ENCODE measurements at regions of chr12 and their contacts with region 1.

Region 1: GRCh38 chr12:122123051-122123760 is 44.6 kb downstream of the MLXIP start:
- DNase-seq: peak; percentile 87
- H3K4me3 ChIP-seq: peak overlapping the region in 2 of 4 donors; percentile 8 to 10
- H3K27ac ChIP-seq: peak overlapping the region; percentile 5 to 77 (median 74)
- H3K4me1 ChIP-seq: peaks cover 0 to 88% (median 74%) of the 10 kb centered on the region in 4 donors
- H3K27me3 ChIP-seq: no peaks in the 10 kb centered on the region
- CTCF ChIP-seq: peak; percentile 79 to 91 (median 84)
- EP300 ChIP-seq: no peak
- POLR2A ChIP-seq: no peak

Region 2: DNA sequence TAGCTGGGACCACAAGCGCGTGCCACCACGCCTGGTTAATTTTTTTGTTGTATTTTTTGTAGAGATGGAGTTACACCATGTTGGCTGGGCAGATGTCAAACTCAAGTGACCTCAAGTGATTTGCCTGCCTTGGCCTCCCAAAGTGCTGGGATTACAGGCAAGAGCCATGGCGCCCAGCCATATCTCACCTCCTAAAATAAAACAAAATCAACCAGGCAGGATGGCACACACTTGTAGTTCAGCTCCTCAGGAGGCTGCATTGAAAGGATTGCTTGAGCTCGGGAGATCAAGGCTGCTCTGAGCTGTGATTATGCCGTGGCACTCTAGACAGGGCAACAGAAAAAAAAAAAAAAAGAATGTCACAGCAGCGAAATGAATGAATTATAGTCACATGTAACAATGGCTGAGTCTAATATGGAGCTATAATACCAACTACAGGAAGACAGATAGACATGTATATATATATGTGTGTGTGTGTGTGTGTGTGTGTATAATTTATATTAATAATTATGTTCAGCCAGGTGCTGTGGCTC is 430.0 kb before region 1 on chr12:
- intact Hi-C with region 1: no loop called
- DNase-seq: no peak
- H3K4me3 ChIP-seq: no peak overlapping the region
- H3K27ac ChIP-seq: no peak overlapping the region
- H3K4me1 ChIP-seq: no peaks in the 10 kb centered on the region
- H3K27me3 ChIP-seq: no peaks in the 10 kb centered on the region
- CTCF ChIP-seq: no peak
- EP300 ChIP-seq: no peak
- POLR2A ChIP-seq: no peak

Region 3: DNA sequence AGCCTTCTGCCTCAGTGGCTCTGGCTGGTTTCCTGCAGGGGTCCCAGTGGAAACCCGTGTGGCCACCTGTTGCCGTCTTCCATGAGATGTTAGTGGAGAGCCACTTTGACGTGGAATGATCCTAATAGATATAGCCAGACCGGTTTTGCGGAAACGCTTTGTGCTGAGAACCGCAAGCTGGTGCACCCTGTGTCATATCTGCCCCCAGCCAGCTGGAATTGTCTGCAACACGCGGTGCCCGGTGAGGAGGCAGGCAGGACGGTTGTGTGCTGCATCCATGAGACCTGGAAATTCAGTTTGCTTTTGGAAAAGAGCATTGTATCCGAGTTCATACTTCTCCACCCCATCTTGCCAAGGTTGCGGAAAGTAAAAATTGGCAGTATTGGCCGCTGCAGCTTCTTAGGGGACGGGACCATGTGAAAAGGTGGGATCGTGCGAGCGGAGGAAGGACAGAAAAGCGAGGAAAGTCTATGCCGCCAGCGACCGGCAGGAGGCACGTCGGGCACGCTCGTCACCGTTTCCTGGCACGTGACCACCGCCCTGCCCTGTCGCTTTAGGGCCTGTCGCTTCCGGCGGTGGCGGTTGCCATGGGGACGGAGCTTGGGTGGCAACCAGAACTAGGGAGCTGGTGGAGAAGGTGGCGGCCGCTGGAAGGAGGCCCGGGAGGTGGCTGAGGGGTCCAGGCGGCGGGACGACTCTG is 205.1 kb before region 1 on chr12 and contains the start of gene CFAP251:
- intact Hi-C with region 1: loop called (anchors 2 kb)
- DNase-seq: peak; percentile 97
- H3K4me3 ChIP-seq: peak within 1 kb of the TSS; percentile 31 to 53 (median 44)
- H3K27ac ChIP-seq: peak within 1 kb of the TSS in 3 of 4 donors; percentile 38 to 52 (median 44)
- H3K4me1 ChIP-seq: peaks cover 0 to 8% (median 0%) of the 10 kb centered on the region in 4 donors
- H3K27me3 ChIP-seq: no peaks in the 10 kb centered on the region
- CTCF ChIP-seq: peak; percentile 53 to 78 (median 62)
- EP300 ChIP-seq: no peak
- POLR2A ChIP-seq: no peak
- total RNA-seq, gene CFAP251: 0.68 to 3.0 (median 1.2) TPM

Region 4: GRCh38 chr12:122054842-122055520 is 68.2 kb before region 1 on chr12:
- intact Hi-C with region 1: loop called (anchors 1 kb)
- DNase-seq: no peak
- H3K4me3 ChIP-seq: no peak overlapping the region
- H3K27ac ChIP-seq: peak overlapping the region in 3 of 4 donors; percentile 93 to 96 (median 93)
- H3K4me1 ChIP-seq: peaks cover 0 to 77% (median 59%) of the 10 kb centered on the region in 4 donors
- H3K27me3 ChIP-seq: no peaks in the 10 kb centered on the region
- CTCF ChIP-seq: no peak
- EP300 ChIP-seq: no peak
- POLR2A ChIP-seq: no peak

Region 5: DNA sequence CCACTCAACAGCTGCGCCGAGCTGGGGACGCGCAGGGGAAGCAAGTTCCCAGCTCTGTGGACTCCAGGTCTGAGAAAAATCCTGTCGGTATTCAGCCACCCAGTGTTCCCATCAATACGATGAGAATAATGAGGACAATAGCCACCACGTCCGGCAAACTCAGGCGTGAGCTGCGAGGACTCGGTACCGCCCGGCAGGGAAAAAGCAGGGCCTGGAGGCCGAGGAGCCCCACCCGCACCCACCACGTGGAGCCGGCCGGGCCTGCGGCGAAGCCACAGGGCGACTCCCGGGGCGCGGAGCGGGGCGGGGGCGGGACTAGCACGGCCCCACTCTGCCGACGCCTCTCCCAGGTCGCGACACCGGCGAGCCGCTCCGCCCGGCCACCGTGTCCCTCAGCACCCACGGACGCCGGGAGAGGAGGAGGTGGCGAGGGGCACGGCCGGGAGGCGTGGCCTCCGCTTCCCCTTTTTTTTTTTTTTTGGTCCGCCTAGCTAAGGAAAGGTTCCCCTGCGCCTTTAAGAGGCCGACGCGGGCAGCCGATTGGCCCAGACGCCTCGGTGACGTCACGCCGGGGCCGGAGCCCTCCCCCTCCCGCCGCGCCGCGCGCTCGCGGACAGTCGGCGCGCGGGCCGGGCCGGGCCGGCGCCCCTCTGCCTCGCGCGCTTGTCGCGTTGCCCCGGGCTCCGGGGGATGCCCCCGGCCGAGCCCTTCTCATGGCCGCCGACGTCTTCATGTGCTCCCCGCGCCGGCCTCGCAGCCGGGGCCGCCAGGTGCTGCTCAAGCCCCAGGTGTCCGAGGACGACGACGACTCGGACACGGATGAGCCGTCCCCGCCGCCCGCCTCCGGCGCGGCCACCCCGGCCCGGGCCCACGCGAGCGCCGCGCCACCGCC is 44.8 kb before region 1 on chr12 and contains the start of gene MLXIP:
- intact Hi-C with region 1: loop called (anchors 5 kb)
- DNase-seq: peak; percentile 98
- H3K4me3 ChIP-seq: peak within 1 kb of the TSS; percentile 77 to 94 (median 90)
- H3K27ac ChIP-seq: peak within 1 kb of the TSS; percentile 87 to 96 (median 90)
- H3K4me1 ChIP-seq: peaks cover 0 to 57% (median 37%) of the 10 kb centered on the region in 4 donors
- H3K27me3 ChIP-seq: no peaks in the 10 kb centered on the region
- CTCF ChIP-seq: no peak
- EP300 ChIP-seq: no peak
- POLR2A ChIP-seq: peak; percentile 18 to 61
- total RNA-seq, gene MLXIP: 32.9 to 87.5 (median 57.3) TPM

Region 6: DNA sequence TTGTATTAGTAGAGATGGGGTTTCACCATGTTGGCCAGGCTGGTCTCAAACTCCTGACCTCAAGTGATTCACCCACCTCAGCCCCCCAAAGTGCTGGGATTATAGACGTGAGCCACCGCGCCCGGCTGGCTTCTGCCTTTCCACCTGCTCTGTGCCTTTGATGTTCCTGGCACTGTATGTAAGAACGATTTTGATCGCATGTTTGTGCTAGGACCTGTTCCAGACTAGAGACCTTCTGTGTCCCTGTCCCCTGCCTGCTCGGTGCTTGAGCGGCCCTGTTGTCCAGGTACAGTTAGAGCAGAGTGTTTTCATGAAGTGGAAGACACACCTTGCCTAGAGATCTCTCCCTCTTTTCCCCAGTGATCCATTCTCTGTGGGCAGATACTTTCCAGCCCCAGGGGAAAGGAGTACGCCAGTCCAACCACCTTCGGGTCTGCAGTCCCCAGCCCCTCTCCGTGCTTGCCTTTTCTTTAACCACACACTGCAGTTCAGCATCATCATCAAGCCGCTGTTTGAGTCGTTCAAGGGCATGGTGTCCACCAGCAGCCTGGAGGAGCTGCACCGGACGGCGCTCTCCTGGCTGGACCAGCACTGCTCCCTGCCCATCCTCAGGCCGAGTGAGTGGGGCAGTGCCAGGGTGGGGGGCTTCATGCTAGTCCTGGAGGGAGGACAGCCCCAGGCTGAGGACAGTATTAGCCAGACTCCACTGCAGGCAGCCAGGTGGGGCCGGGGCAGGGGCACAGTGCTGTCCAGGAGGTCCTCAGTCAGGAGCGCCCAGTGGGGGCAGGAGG is 17.5 kb after region 1 on chr12:
- intact Hi-C with region 1: loop called (anchors 1 kb)
- DNase-seq: no peak
- H3K4me3 ChIP-seq: no peak overlapping the region
- H3K27ac ChIP-seq: no peak overlapping the region
- H3K4me1 ChIP-seq: no peaks in the 10 kb centered on the region
- H3K27me3 ChIP-seq: no peaks in the 10 kb centered on the region
- CTCF ChIP-seq: no peak
- EP300 ChIP-seq: no peak
- POLR2A ChIP-seq: no peak

Region 7: GRCh38 chr12:122166422-122167349 is 43.5 kb after region 1 on chr12:
- intact Hi-C with region 1: no loop called
- DNase-seq: no peak
- H3K4me3 ChIP-seq: no peak overlapping the region
- H3K27ac ChIP-seq: no peak overlapping the region
- H3K4me1 ChIP-seq: no peaks in the 10 kb centered on the region
- H3K27me3 ChIP-seq: peaks cover 0 to 3% (median under 1%) of the 10 kb centered on the region in 3 donors
- CTCF ChIP-seq: no peak
- EP300 ChIP-seq: no peak
- POLR2A ChIP-seq: no peak